Colonic mucosa (tissue), 4 donors: ENCODE measurements at regions of chr15 and their contacts with region 1.

Region 1: GRCh38 chr15:41474436-41475359 is 19.0 kb upstream of the ITPKA start:
- DNase-seq: peak; percentile 76
- H3K4me3 ChIP-seq: no peak overlapping the region
- H3K27ac ChIP-seq: peak overlapping the region; percentile 87
- H3K4me1 ChIP-seq: peaks cover 2% of the 10 kb centered on the region
- H3K27me3 ChIP-seq: no peaks in the 10 kb centered on the region
- CTCF ChIP-seq: peak; percentile 0

Region 2: DNA sequence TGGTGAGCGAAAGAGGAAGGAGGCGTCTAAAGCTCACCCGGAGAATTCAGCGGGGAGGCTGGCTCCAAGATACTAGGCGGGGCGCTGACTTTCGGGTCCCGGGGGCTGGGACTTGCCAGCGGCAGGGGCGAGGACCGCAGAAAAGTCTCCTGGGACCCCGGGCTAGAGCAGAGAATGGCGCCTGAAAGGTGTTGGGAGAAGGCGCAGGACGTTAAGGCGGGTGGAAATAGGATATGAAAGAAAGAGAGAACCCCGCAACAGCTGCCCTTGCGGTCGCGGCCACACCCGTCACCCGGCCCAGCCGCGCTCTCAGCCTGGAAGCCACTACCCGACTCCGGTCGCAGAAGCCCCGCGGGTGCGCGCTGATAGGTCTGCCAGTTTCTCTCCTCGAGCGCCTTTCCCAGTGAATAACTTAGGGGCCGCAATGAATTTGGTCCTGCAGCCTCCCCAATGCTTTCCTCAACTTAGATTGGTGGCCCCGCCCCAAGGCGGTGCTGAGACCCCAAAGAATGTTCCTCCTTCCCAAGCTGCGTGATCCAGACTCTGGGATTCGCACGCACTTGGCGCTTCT is 38.3 kb after region 1 on chr15:
- intact Hi-C with region 1: loop called (anchors 5 kb)
- DNase-seq: peak; percentile 40
- H3K4me3 ChIP-seq: peak overlapping the region; percentile 40
- H3K27ac ChIP-seq: no peak overlapping the region
- H3K4me1 ChIP-seq: peaks cover 12% of the 10 kb centered on the region
- H3K27me3 ChIP-seq: peaks cover 23% of the 10 kb centered on the region
- CTCF ChIP-seq: no peak